Activated B cell treated with CpG ODN at 0.5 μM for 24 hours (primary cell): ENCODE measurements at regions of chr5 and their contacts with region 1.

Region 1: DNA sequence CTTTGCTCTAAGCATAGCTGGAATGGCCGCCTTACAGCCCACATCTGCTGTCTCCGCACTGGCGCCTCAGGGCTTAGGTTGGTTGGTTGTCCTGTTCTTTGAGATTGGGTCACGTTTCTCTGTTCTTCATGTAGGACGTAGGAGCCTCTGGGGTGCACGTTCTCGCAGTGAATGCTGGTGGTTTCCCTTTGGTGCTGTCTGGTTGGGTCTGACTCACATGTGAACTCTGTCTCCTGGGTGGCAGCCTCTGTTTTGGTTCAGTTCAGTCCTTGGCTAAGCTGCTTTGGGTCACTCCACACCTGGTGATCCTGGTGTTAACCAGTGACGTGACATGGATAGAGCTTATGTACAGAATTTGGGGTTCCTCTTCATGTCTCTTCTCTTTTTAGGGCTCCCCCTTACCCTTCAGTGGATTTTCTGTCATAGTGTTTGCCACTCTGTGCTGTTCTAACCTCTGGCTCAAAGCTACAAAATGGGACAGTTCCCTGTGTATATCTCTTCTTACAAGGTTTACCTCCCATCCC is 12.6 kb upstream of the LPCAT1 start:
- DNase-seq: peak; percentile 54
- ATAC-seq: peak; percentile 97
- H3K4me3 Mint-ChIP-seq: peak overlapping the region; percentile 63
- H3K27ac Mint-ChIP-seq: peak overlapping the region; percentile 93
- H3K4me1 Mint-ChIP-seq: peaks cover 36% of the 10 kb centered on the region
- H3K27me3 Mint-ChIP-seq: no peaks in the 10 kb centered on the region
- CTCF ChIP-seq: no peak

Region 2: GRCh38 chr5:1380011-1380817 is 156.2 kb before region 1 on chr5:
- CTCF ChIA-PET with region 1: no interaction called
- POLR2A ChIA-PET with region 1: no interaction called
- intact Hi-C with region 1: loop called (anchors 1 kb)
- DNase-seq: peak; percentile 69
- ATAC-seq: peak; percentile 97
- H3K4me3 Mint-ChIP-seq: peak overlapping the region; percentile 78
- H3K27ac Mint-ChIP-seq: no peak overlapping the region
- H3K4me1 Mint-ChIP-seq: peaks cover 22% of the 10 kb centered on the region
- H3K27me3 Mint-ChIP-seq: peaks cover 5% of the 10 kb centered on the region
- CTCF ChIP-seq: peak; percentile 50

Region 3: DNA sequence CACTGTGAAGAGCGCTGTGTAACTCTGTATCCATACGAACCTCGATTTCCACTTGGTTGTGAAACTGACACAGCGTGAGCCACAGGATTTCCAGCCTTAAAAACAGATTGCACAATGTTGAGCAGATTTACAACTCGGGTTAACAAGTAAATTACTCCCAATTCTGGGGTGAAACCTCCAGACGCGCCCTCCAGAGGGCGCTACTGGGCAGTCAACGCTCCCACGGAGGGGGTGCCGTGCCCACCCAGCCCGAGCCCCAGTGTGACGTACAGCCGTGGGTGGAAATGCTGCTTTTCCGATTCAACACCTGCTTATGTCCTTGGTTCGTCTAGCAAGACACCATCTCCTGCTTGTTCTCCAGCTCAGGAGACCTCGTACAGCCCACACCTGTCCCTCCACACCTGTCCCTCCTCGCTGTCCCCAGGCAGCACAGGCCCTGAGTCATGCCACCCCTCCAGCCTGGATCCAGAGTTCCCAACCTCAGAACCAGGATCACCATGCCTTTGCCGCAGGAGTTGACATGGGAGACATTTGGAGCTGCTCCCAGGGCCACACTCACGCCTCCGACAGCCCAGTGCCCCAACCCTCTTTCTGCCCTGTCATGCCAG is 56.7 kb before region 1 on chr5:
- CTCF ChIA-PET with region 1: interaction called, 3 read pairs
- POLR2A ChIA-PET with region 1: interaction called, 65 read pairs
- intact Hi-C with region 1: loop called (anchors 1 kb)
- DNase-seq: peak; percentile 68
- ATAC-seq: peak; percentile 53
- H3K4me3 Mint-ChIP-seq: peak overlapping the region; percentile 73
- H3K27ac Mint-ChIP-seq: peak overlapping the region; percentile 92
- H3K4me1 Mint-ChIP-seq: peaks cover 61% of the 10 kb centered on the region
- H3K27me3 Mint-ChIP-seq: no peaks in the 10 kb centered on the region
- CTCF ChIP-seq: no peak

Region 4: GRCh38 chr5:1494780-1495524 is 41.4 kb before region 1 on chr5:
- CTCF ChIA-PET with region 1: interaction called, 3 read pairs
- POLR2A ChIA-PET with region 1: interaction called, 30 read pairs
- intact Hi-C with region 1: loop called (anchors 1 kb)
- DNase-seq: peak; percentile 78
- ATAC-seq: peak; percentile 59
- H3K4me3 Mint-ChIP-seq: peak overlapping the region; percentile 84
- H3K27ac Mint-ChIP-seq: peak overlapping the region; percentile 83
- H3K4me1 Mint-ChIP-seq: peaks cover 100% of the 10 kb centered on the region
- H3K27me3 Mint-ChIP-seq: no peaks in the 10 kb centered on the region
- CTCF ChIP-seq: no peak

Region 5: DNA sequence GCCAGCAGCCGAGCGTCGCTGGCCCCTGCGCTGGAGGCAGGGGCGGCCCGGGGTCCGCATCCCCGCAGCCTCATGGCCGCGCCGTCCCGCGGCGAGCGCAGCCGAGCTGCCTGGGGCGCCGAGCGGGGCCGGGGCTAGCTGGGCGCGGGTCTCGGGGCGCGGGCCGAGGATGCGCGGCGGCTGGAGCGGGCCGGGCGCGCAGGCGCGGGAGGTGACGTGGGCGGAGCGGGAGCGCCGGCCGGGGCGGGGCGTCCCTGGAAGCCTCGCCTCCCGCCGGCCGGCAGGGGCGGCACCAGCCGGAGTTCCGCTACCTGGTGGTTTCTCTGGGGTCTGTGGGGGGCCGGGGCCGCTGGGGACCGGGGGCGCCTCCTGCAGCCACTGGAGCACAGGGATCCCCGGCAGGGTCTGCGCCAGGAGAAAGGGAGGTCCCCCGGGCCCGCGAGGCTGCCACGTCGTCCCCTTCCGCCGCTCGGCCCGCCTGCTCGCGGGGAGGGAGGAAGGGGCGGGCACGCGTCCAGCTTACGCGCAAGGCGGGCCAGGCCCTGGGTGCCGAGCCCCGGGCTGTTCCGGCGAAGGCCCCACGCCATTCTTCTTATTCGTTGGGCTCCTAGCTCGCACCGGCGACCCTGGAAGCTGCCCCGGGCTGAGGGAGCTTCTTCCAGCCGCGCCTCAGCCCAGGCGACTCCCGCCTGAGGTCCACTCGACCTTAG is 12.5 kb before region 1 on chr5 and contains the start of gene LPCAT1:
- CTCF ChIA-PET with region 1: interaction called, 8 read pairs
- POLR2A ChIA-PET with region 1: interaction called, 63 read pairs
- intact Hi-C with region 1: loop called (anchors 1 kb)
- DNase-seq: peak; percentile 91
- ATAC-seq: peak; percentile 82
- H3K4me3 Mint-ChIP-seq: peak within 1 kb of the TSS; percentile 91
- H3K27ac Mint-ChIP-seq: peak within 1 kb of the TSS; percentile 87
- H3K4me1 Mint-ChIP-seq: peaks cover 57% of the 10 kb centered on the region
- H3K27me3 Mint-ChIP-seq: no peaks in the 10 kb centered on the region
- CTCF ChIP-seq: no peak
- total RNA-seq, gene LPCAT1: 246 and 269 TPM in 2 replicates

Region 6: GRCh38 chr5:1936413-1936812 is 400.0 kb after region 1 on chr5:
- CTCF ChIA-PET with region 1: no interaction called
- POLR2A ChIA-PET with region 1: no interaction called
- intact Hi-C with region 1: no loop called
- DNase-seq: no peak
- ATAC-seq: no peak
- H3K4me3 Mint-ChIP-seq: no peak overlapping the region
- H3K27ac Mint-ChIP-seq: no peak overlapping the region
- H3K4me1 Mint-ChIP-seq: no peaks in the 10 kb centered on the region
- H3K27me3 Mint-ChIP-seq: peaks cover 20% of the 10 kb centered on the region
- CTCF ChIP-seq: no peak